ENCODE measurements at regions of chr6 and their contacts with region 1.

Region 1: DNA sequence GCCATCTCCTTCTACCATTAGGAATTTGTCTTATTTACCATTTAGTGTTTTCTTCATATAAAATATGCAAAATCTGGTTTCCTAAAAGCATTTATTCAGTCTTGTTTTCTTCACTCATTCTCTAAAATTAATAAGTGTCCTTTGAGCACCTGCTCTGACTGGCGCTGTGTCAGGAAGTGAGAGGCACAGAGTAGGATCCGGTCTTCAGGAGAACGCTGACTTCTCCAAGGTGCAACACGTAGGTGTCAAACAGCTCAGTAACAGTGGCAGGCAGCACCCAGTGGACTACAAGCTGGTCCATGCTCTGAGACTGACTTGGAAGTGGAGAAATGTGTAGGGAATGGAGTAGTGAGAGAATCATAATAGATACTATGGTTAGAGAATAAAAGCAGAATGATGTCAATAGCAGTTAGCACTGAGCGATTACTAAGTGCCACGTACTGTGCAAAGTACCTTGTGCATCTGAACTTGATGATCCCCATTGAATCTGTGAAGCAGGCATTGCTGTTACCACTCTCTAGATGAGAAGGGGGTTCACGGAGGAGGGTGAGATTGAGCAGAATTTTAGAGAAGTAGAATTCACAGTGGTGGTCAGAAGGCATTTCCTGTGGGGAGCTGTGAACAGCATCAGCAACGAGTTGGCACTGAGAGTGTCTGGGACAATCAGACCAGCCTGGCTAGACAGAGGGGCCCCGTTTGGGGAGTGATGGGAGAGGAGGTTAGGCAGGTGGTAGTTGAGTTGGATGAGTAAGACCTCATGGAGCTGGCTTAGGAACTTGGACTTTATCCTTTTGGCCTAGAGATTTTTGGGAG is 569.8 kb downstream of the QKI start:
- DNase-seq: no peak
- ATAC-seq: peak; percentile 8
- H3K4me3 ChIP-seq: no peak overlapping the region
- H3K27ac ChIP-seq: no peak overlapping the region
- H3K4me1 ChIP-seq: no peaks in the 10 kb centered on the region
- H3K27me3 ChIP-seq: no peaks in the 10 kb centered on the region
- CTCF ChIP-seq: no peak
- POLR2A ChIP-seq: no peak

Region 2: DNA sequence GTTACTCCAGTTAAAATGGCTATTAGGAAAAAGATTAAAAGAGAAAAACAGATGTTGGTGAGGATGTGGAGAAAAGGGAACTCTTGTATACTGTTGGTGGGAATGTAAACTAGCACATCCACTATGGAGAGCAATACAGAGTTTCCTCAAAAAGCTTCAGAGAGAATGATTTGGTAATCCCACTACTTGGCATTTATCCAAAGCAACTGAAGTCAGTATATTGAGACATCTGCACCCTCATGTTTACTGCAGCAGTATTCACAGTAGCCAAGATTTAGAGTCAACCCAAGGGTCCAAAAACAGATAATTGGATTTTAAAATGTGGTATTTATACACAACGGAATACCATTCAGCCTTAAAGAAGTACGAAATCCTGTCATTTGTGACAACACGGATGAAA is 100.3 kb before region 1 on chr6:
- in situ Hi-C with region 1: no loop called
- intact Hi-C with region 1: no loop called
- DNase-seq: no peak
- ATAC-seq: peak in 1 of 2 donors; percentile 36
- H3K4me3 ChIP-seq: no peak overlapping the region
- H3K27ac ChIP-seq: no peak overlapping the region
- H3K4me1 ChIP-seq: peaks cover 0 to under 1% of the 10 kb centered on the region in 2 donors
- H3K27me3 ChIP-seq: no peaks in the 10 kb centered on the region
- CTCF ChIP-seq: no peak
- POLR2A ChIP-seq: no peak

Region 3: GRCh38 chr6:164021589-164022250 is 37.4 kb after region 1 on chr6:
- in situ Hi-C with region 1: no loop called
- intact Hi-C with region 1: no loop called
- DNase-seq: no peak
- ATAC-seq: no peak
- H3K4me3 ChIP-seq: no peak overlapping the region
- H3K27ac ChIP-seq: no peak overlapping the region
- H3K4me1 ChIP-seq: peaks cover 15 to 32% of the 10 kb centered on the region in 2 donors
- H3K27me3 ChIP-seq: no peaks in the 10 kb centered on the region
- CTCF ChIP-seq: no peak
- POLR2A ChIP-seq: no peak

Region 4: GRCh38 chr6:164911873-164912580 is 927.7 kb after region 1 on chr6:
- in situ Hi-C with region 1: loop called in 1 of 4 experiments (anchors 25 kb)
- intact Hi-C with region 1: no loop called
- DNase-seq: no peak
- ATAC-seq: peak; percentile 50 to 65
- H3K4me3 ChIP-seq: peak overlapping the region; percentile 29 to 54 (median 32)
- H3K27ac ChIP-seq: peak overlapping the region; percentile 1 to 43 (median 36)
- H3K4me1 ChIP-seq: peaks cover 16 to 17% of the 10 kb centered on the region in 2 donors
- H3K27me3 ChIP-seq: no peaks in the 10 kb centered on the region
- CTCF ChIP-seq: no peak
- POLR2A ChIP-seq: no peak

Measured in gastrocnemius medialis (tissue), 4 donors.